Activated naive CD4-positive, alpha-beta T cell treated with anti-CD3 and anti-CD28 coated beads for 36 hours (primary cell): ENCODE measurements at regions of chr13 and their contacts with region 1.

Region 1: GRCh38 chr13:46160471-46161066 is 21.4 kb downstream of the LCP1 start:
- DNase-seq: peak; percentile 51
- H3K4me3 Mint-ChIP-seq: peak overlapping the region; percentile 51
- H3K27ac Mint-ChIP-seq: peak overlapping the region; percentile 94
- H3K4me1 Mint-ChIP-seq: peaks cover 67% of the 10 kb centered on the region
- H3K27me3 Mint-ChIP-seq: no peaks in the 10 kb centered on the region

Region 2: GRCh38 chr13:45332036-45332830 is 828.3 kb before region 1 on chr13:
- CTCF ChIA-PET with region 1: no interaction called
- intact Hi-C with region 1: loop called (anchors 10 kb)
- DNase-seq: no peak
- H3K4me3 Mint-ChIP-seq: no peak overlapping the region
- H3K27ac Mint-ChIP-seq: peak overlapping the region; percentile 57
- H3K4me1 Mint-ChIP-seq: peaks cover 91% of the 10 kb centered on the region
- H3K27me3 Mint-ChIP-seq: no peaks in the 10 kb centered on the region

Region 3: DNA sequence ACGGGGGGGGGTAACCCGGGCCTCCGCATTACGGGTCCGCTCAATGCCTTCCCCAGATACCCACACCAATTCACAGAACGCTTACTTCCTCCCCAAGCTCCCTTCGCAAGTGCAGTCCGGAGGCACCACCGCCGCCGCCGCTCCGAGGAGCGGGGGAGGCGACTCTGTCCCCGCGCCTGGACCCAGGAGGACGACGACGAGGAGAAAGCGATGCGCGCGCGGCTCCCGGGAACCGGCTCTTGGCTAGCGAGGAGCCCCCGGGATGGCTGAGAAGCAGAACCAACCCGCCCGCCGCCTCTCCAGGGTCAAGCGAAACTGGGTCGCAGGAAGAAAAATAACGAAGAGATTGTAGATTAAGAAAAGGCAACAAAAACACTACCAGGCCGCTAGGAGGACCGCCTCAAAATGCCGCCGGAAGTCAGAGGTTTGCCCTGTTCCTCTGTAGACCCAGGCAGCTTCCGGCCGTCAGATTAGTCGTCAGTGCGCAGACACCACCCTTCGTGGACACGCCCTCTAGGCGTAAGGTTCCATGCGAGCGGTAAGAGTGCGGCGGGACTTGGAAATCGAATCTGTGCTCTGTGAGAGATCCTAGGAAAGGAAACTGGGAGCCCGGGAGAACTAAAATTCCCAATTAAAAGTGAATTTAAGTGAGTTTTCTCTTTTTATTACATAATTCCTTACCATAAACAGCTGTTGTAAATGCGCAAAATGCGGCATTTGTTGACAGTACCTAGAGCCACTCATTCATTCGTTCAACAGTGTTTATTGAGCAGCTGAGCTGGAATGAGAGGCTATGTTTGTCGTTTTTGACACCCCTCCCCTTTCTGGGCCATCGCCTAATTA is 108.0 kb before region 1 on chr13 and contains the start of gene ZC3H13:
- CTCF ChIA-PET with region 1: interaction called, 3 read pairs
- intact Hi-C with region 1: loop called (anchors 1 kb)
- DNase-seq: peak; percentile 97
- H3K4me3 Mint-ChIP-seq: peak within 1 kb of the TSS; percentile 81
- H3K27ac Mint-ChIP-seq: peak within 1 kb of the TSS; percentile 94
- H3K4me1 Mint-ChIP-seq: peaks cover 29% of the 10 kb centered on the region
- H3K27me3 Mint-ChIP-seq: peaks cover 4% of the 10 kb centered on the region
- total RNA-seq, gene ZC3H13: 38.2 to 42.2 TPM

Region 4: DNA sequence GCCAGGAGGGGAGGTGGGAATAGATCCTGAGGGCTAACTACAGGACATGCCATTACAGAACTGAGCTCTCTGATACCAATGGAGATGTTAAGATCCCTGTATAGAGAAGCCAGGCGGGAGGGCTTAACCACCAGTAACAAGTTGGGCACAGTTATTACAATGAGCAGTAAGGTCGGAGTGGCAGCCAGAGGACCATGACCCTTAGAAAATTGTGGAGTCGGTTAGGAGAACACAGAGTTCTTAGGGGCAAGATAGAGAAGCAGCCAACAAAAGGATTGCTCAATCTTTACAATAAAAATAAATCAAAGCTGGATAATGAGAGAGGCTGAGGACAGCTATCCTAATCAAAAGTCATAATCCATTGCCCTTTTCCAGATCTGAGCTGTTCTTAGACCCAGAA is 66.1 kb before region 1 on chr13:
- CTCF ChIA-PET with region 1: no interaction called
- intact Hi-C with region 1: no loop called
- DNase-seq: no peak
- H3K4me3 Mint-ChIP-seq: no peak overlapping the region
- H3K27ac Mint-ChIP-seq: no peak overlapping the region
- H3K4me1 Mint-ChIP-seq: no peaks in the 10 kb centered on the region
- H3K27me3 Mint-ChIP-seq: peaks cover 2% of the 10 kb centered on the region

Region 5: GRCh38 chr13:46142776-46143175 is 17.8 kb before region 1 on chr13:
- CTCF ChIA-PET with region 1: interaction called, 28 read pairs
- intact Hi-C with region 1: no loop called
- DNase-seq: no peak
- H3K4me3 Mint-ChIP-seq: no peak overlapping the region
- H3K27ac Mint-ChIP-seq: peak overlapping the region; percentile 48
- H3K4me1 Mint-ChIP-seq: peaks cover 45% of the 10 kb centered on the region
- H3K27me3 Mint-ChIP-seq: no peaks in the 10 kb centered on the region

Region 6: DNA sequence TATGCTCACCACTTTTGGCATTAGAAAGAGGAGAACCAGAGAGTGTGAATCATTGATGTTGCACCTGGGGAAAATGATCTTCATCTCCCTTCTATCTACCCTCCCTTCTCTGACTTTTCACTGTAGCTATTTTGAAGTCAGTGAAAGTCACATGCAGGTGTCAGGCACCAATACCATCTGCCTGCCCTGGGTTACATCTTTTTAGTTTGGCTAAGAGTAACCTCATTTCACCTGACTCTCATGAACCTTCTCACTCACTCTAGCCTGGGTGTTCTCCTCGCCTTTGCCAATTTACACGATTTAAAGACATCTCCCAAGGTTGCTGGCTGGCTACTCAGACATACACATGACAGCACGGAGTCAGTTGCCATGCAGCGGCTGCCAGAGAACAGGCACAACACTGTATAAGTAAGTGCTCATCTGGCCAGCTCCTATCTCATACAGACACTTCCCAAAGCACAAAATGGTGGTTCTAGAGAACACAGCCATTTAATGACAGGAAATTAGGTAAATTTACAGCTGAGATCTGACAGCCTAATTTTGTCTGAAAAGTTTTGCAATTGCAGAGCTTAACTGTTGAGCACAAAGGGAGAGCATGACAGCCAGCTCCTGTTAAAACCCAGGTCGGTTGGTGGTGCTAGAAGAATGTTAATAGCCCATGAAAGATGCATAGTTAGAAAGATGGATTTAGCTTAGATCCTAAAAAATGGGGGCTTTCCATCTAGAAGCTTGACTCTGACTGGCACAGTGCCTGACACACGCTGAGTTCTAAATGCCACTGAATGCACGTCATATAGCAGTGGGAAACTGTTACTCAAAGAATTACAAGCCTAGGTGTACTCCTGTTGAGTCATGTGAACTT is 11.1 kb before region 1 on chr13:
- CTCF ChIA-PET with region 1: interaction called, 28 read pairs
- intact Hi-C with region 1: loop called (anchors 1 kb)
- DNase-seq: peak; percentile 81
- H3K4me3 Mint-ChIP-seq: no peak overlapping the region
- H3K27ac Mint-ChIP-seq: peak overlapping the region; percentile 89
- H3K4me1 Mint-ChIP-seq: peaks cover 51% of the 10 kb centered on the region
- H3K27me3 Mint-ChIP-seq: no peaks in the 10 kb centered on the region

Region 7: DNA sequence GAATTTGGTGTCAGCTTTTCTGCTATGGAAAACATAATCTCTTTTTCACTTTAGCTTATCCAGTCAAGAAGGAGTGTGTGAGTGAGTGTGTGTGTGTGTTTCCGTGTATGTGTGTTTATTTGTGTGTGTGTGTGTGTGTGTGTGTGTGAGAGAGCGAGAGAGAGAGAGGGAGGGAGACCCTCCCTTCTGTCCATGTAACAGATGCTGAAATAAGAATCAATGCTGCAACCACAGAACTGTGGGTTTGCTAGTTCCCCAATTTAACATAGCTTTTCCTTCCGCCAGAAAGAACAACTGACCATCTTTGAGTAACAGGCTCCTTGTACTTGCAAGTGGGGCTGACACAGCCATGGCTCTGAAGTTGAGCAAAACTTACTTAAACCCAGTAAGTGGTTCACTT is 16.2 kb after region 1 on chr13:
- CTCF ChIA-PET with region 1: interaction called, 106 read pairs
- intact Hi-C with region 1: loop called (anchors 1 kb)
- DNase-seq: no peak
- H3K4me3 Mint-ChIP-seq: peak overlapping the region; percentile 72
- H3K27ac Mint-ChIP-seq: peak overlapping the region; percentile 98
- H3K4me1 Mint-ChIP-seq: peaks cover 56% of the 10 kb centered on the region
- H3K27me3 Mint-ChIP-seq: no peaks in the 10 kb centered on the region

Region 8: DNA sequence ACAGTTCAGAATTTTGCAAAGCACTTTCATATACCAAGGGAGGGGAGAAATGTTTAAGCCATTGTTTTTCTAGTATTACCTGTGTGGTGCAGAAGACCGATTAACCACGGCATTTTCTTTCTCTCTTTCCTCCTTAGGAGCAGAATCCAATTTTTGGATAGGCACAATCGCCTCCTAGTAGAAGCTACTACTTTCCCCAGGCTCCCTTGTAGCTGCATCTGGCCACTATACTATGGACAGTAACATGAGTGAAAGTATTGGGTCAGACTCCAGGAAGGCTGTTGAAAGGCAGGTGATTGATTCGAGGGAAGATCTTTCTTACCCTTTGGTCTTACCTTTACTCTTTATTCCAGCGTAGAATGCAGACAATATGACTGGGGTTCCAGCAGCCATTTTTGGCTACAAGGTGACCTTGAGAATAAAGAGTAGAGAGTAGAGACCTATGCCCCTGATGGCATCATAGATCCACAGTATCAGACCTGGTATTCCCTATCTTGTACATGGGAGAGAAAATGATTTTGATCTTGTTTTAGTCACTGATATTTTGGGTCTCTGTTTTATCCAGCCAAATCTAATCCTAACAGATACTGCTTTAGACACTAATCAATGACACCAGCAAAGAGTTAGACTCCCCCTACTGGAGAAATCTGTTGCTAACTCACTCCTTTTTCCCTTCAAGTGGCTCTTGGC is 128.1 kb after region 1 on chr13:
- CTCF ChIA-PET with region 1: interaction called, 4 read pairs
- intact Hi-C with region 1: loop called (anchors 1 kb)
- DNase-seq: no peak
- H3K4me3 Mint-ChIP-seq: no peak overlapping the region
- H3K27ac Mint-ChIP-seq: no peak overlapping the region
- H3K4me1 Mint-ChIP-seq: peaks cover 17% of the 10 kb centered on the region
- H3K27me3 Mint-ChIP-seq: no peaks in the 10 kb centered on the region